Cardiac septum (tissue), 1 donor: ENCODE measurements at regions of chr18 and their contacts with region 1.

Region 1: DNA sequence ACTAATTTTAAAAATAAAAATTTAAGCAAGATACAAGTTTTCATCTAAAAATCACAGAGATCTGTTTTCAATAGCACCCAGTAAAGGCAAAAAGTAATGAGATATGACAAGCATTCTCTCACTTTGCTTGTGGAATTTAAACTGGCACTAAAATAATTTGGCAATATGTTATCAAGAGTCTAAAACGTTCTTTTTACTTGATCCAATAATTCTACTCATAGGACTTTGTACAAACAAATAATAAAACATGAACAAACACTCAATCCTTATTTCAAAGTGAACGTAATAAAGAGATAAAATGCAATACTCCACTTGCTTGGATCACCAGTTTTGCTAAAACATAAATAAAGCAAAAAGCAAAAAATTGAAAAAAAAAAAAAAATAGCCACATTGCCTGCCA is 30.4 kb downstream of the PIAS2 start:
- DNase-seq: no peak

Region 2: DNA sequence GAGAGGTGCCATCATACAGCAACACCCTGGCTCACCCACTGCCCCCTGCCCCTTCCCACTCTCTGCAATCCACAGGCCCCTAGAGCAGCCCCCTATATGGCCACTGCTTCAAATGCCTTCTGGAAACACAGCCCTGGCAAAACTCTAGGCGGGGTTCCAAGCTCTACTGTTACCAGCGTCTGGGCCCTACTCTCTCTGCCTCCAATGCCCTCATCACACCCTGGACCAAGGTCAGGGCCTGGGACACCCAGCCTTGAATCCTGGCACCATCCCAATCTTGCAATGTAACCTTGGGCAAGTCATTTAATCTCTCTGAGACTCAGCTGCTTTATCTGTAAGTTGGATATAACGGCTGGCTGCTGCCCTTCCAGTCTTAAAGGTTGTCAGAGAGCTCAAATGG is 190.6 kb before region 1 on chr18:
- intact Hi-C with region 1: no loop called
- DNase-seq: no peak

Region 3: GRCh38 chr18:46821856-46822711 is 64.8 kb before region 1 on chr18:
- intact Hi-C with region 1: loop called (anchors 10 kb)
- DNase-seq: no peak

Region 4: DNA sequence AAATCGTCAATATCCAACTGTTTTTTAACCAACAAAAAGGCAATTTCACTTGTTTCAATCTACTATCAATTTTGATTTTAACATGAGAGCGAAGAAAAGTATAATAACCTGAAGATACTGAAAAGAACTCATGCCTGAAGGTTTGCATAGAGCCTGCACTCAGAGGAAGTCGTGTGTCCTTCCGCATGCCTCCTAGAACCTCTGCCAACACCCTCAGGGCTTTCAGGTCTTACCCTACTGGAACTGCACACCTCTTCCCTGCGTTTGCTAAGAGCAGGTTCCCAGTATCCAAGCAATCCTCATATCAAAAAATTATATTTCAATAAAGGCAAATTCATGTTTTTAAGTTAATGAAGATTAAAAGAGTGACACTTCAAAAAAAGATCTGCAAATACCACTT is 44.3 kb before region 1 on chr18:
- intact Hi-C with region 1: no loop called
- DNase-seq: no peak